ENCODE measurements at regions of chr11 and their contacts with region 1.

Region 1: DNA sequence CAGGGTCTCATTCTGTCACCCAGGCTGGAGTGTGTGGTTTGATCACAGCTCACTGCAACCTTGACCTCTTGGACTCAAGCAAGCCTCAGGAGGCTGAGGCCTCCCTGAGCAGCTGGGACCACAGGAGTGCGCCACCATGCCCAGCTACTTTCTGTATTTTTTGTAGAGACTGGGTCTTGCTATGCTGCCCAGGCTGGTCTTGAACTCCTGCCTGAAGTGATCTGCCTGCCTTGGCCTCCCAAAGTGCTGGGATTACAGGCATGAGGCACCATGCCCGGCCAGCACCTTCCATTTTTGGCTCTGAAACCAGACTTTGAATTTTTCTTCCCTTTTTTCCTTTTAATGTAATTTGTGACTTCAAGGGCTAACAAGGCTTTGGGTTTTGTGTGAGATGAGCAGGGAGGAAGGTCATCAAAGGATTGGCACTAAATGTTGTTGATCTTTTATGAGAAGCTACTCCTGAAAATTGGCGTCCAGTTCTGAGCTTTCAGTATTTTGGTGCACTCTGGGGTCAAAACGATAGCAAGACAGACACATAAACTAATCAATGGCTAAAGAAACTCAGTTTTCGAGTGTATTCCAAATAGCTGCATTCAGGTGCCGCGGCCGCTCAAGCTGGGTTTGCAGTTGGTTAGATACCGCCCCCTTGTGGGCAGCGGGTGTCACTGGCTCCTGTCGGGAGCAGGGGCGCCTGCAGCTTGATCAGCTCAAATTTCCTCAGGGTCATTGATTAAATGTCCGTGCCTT is 51.9 kb upstream of the CLMP start:
- DNase-seq: peak; percentile 86

Region 2: GRCh38 chr11:123103326-123103980 is 143.5 kb before region 1 on chr11:
- CTCF ChIA-PET with region 1: interaction called, 71 read pairs
- POLR2A ChIA-PET with region 1: interaction called, 4 read pairs
- DNase-seq: peak; percentile 62

Region 3: GRCh38 chr11:123110356-123110755 is 136.6 kb before region 1 on chr11:
- CTCF ChIA-PET with region 1: interaction called, 71 read pairs
- POLR2A ChIA-PET with region 1: no interaction called
- DNase-seq: no peak